ENCODE measurements at regions of chr9 and their contacts with region 1.

Region 1: DNA sequence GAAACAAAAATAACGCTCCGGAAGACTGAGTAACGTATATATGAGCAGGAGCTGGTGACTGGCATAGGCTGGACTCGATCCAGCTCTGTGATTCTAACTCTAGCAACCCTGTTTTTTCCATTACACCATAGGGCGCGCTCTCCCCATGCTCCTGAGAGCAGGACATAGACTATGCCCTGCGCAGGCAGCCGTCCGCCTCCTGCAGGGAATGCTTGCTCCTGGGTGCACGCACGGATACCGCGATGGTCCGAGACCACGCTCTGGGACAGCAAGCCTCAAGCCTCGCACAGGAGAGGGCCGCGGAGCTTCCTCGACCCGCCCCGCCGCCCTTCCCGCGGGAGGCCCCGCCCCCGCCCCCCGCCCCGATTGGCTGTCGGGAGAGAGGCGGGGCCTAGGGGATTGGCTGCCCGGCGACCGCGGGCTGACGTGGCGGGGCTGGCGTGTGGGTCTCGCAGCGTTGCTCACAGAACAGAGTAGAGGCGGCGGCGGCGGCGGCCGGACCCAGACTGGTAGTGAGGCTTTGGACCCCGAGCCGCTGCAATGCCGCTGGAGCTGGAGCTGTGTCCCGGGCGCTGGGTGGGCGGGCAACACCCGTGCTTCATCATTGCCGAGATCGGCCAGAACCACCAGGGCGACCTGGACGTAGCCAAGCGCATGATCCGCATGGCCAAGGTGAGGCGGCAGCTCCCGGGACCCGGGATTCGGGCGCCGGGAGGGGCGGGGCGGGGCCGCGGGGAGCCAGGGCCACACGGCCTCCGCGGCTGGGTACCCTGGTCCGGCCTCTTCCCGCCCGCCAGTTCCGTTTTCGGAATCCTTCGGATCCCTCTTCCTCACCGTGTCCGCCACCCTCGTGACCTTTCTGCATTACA is at the start of gene NANS:
- DNase-seq: peak; percentile 86 to 94 (median 94)
- H3K4me3 ChIP-seq: peak within 1 kb of the TSS; percentile 62 to 92 (median 80)
- H3K27ac ChIP-seq: peak within 1 kb of the TSS; percentile 54 to 89
- H3K4me1 ChIP-seq: peaks cover 0 to 23% (median 18%) of the 10 kb centered on the region in 4 experiments
- H3K27me3 ChIP-seq: no peaks in the 10 kb centered on the region

Region 2: DNA sequence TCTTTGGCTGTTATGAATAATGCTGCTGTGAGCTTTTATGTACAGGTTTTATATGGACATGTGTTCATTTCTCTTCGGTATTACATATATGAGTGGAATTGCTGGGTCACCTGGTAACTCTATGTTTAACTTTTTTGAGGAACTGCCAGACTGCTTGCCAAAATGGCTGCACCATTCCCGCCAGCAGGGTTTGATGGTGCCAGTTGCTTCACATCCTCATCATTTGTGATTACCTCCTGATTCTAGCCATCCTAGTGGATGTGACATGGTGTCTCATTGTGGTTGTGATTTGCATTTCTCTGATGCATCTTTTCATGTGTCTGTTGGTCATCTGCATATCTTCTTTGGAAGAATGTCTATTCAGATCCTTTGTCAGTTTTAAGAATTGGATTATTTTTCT is 10.7 kb after region 1 on chr9:
- CTCF ChIA-PET with region 1: interaction called, 16 read pairs
- POLR2A ChIA-PET with region 1: interaction called, 5 read pairs
- DNase-seq: peak in 1 of 3 donors; percentile 31
- H3K4me3 ChIP-seq: no peak overlapping the region
- H3K27ac ChIP-seq: no peak overlapping the region
- H3K4me1 ChIP-seq: peaks cover 0 to 7% (median 6%) of the 10 kb centered on the region in 4 experiments
- H3K27me3 ChIP-seq: no peaks in the 10 kb centered on the region

Region 3: GRCh38 chr9:98074115-98074990 is 17.9 kb after region 1 on chr9:
- CTCF ChIA-PET with region 1: interaction called, 15 read pairs
- POLR2A ChIA-PET with region 1: no interaction called
- DNase-seq: peak; percentile 42 to 62 (median 54)
- H3K4me3 ChIP-seq: no peak overlapping the region
- H3K27ac ChIP-seq: no peak overlapping the region
- H3K4me1 ChIP-seq: peaks cover 0 to 20% (median 13%) of the 10 kb centered on the region in 4 experiments
- H3K27me3 ChIP-seq: no peaks in the 10 kb centered on the region

Region 4: DNA sequence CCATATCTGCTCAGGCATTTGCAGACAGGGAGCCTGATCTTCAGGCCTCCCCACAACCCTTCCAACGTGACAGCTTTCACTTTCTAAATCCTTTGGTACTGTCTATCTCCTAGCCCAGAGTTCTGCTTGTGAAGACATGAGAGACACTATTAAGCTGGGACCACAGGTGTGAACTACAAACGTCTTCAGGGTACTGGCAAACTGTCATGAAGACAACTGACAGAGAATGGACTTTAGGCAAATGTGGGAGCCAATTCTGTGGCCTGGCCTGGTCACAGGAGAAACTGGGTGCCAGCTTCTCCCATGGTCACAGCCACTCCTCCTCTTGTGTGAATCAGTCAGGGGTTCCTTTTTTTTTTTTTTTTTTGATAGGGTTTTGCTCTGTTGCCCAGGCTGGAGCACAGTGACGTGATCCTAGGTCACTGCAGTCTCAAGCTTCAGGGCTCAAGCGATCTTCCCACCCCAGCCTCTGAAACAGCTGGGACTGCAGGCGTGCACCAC is 52.1 kb after region 1 on chr9:
- CTCF ChIA-PET with region 1: no interaction called
- POLR2A ChIA-PET with region 1: no interaction called
- DNase-seq: peak; percentile 62 to 86 (median 79)
- H3K4me3 ChIP-seq: peak overlapping the region in 5 of 7 experiments; percentile 13 to 32 (median 14)
- H3K27ac ChIP-seq: peak overlapping the region; percentile 64 to 76
- H3K4me1 ChIP-seq: peaks cover 0 to 61% (median 49%) of the 10 kb centered on the region in 4 experiments
- H3K27me3 ChIP-seq: no peaks in the 10 kb centered on the region

Region 5: DNA sequence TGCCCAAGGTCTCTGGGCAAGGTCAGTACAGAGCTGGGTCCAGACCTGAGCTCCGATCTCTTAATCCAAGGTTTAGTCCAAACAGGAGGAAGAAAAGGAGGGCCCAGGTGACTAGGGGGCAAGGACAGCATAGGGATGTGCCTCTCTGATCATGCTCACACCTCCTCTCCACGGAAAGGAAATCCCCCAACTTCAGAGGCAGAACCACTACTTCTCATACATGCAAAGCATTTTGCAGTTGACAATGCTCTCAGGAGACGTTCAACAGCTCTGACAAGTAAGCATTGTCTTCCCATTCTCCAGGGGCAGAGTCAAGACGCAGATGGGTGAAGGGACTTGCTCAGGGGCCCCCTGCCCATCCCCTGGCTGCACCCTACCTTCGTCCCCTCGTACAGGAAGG is 144.6 kb after region 1 on chr9:
- CTCF ChIA-PET with region 1: no interaction called
- POLR2A ChIA-PET with region 1: no interaction called
- DNase-seq: no peak
- H3K4me3 ChIP-seq: no peak overlapping the region
- H3K27ac ChIP-seq: no peak overlapping the region
- H3K4me1 ChIP-seq: peaks cover 0 to 2% (median 0%) of the 10 kb centered on the region in 4 experiments
- H3K27me3 ChIP-seq: no peaks in the 10 kb centered on the region

Measured in common myeloid progenitor, CD34-positive (primary cell).